ENCODE measurements at regions of chr1 and their contacts with region 1.

Region 1: DNA sequence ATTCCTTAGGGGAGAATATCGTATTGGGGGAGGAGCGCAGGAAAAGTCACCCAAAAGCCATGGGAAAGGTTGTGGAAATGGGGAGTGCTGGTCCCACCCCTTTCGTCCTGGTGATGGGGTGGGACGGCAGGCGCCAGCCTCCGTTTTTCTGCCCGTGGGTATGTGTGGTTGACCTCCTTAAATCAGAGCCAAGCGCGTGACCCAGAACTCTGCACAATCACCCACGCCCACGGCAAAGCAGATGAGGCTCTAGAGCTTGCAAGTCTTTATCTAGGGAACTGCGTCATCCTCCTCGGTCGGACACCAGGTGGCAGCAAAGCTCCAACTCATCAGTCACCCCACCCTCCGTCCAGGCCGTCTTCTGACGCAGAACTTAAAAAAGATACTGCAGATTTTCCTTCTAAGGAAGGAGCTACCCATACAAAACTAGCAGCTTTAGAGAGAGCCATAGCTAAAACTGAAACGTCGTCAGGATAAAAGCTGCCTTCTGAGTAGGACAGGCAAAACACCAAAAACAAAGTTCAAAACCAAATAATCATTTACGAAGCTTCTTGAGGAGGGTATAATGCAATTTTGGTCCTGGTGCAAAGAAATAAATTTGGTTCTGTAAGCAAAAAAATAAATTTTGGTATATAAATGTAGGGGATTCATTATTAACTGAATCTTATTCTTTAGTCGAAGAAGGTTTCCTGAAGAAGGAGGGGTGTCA is 62.0 kb downstream of the TBX19 start:
- DNase-seq: peak; percentile 76 to 93 (median 83)
- ATAC-seq: peak; percentile 98
- H3K4me3 ChIP-seq: no peak overlapping the region
- H3K27ac ChIP-seq: no peak overlapping the region
- H3K4me1 ChIP-seq: peaks cover 3 to 20% of the 10 kb centered on the region in 2 experiments; a peak in 4 of 5 replicates
- H3K27me3 ChIP-seq: no peaks in the 10 kb centered on the region
- CTCF ChIP-seq: peak; percentile 91 to 95 (median 92)
- EP300 ChIP-seq: no peak
- POLR2A ChIP-seq: no peak
- RAD21 ChIP-seq: peak; percentile 96

Region 2: GRCh38 chr1:168092566-168093355 is 250.0 kb before region 1 on chr1:
- CTCF ChIA-PET with region 1: interaction called, 5 read pairs
- POLR2A ChIA-PET with region 1: no interaction called
- in situ Hi-C with region 1: no loop called
- intact Hi-C with region 1: loop called (anchors 5 kb)
- DNase-seq: peak in 3 of 4 experiments; percentile 34 to 41 (median 37)
- ATAC-seq: peak; percentile 56
- H3K4me3 ChIP-seq: no peak overlapping the region
- H3K27ac ChIP-seq: no peak overlapping the region
- H3K4me1 ChIP-seq: peaks cover 0 to 8% of the 10 kb centered on the region in 2 experiments; a peak in 2 of 5 replicates
- H3K27me3 ChIP-seq: peaks cover 9 to 39% of the 10 kb centered on the region in 2 experiments; a peak in 4 of 5 replicates
- CTCF ChIP-seq: peak; percentile 43 to 62 (median 59); a peak in 5 of 6 replicates
- EP300 ChIP-seq: no peak
- POLR2A ChIP-seq: no peak
- RAD21 ChIP-seq: peak; percentile 47 to 76; a peak in 3 of 4 replicates

Region 3: DNA sequence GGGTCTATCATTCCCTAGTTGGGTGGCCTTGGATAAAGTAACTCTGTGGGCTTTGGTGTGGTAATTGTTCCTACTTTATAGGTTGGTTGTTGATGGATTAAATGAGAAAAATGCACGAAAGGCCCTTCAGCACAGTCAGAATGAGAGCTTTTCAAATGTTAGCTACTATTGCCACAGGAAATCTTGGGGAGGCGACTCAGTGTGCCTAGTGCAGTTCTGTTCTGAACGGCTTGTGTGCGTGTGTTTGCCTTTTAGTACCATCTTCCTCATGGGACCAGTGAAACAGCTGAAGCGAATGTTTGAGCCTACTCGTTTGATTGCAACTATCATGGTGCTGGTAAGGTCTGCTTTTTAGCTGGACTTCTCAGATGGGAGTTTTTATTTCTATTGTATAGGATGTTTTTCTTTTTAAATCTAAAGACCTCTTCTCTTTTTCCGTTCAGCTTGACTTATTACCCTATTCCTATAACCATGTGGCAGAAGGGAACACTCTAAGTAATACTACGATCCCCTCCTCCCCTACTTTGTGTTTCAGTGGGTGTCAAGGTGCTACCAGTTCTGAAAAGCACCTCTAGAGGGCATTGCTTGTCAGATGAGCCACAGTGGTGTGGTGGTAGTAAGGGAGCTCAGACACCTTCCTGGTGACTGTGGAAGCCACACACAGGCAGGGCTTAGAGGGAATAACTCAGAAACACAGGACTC is 107.7 kb before region 1 on chr1:
- CTCF ChIA-PET with region 1: no interaction called
- POLR2A ChIA-PET with region 1: no interaction called
- in situ Hi-C with region 1: no loop called
- intact Hi-C with region 1: loop called (anchors 1 kb)
- DNase-seq: peak; percentile 67 to 78 (median 74)
- ATAC-seq: peak; percentile 99
- H3K4me3 ChIP-seq: no peak overlapping the region
- H3K27ac ChIP-seq: no peak overlapping the region
- H3K4me1 ChIP-seq: no peaks in the 10 kb centered on the region
- H3K27me3 ChIP-seq: no peaks in the 10 kb centered on the region
- CTCF ChIP-seq: peak; percentile 86 to 89 (median 88)
- EP300 ChIP-seq: no peak
- POLR2A ChIP-seq: no peak
- RAD21 ChIP-seq: peak; percentile 78 to 92

Region 4: DNA sequence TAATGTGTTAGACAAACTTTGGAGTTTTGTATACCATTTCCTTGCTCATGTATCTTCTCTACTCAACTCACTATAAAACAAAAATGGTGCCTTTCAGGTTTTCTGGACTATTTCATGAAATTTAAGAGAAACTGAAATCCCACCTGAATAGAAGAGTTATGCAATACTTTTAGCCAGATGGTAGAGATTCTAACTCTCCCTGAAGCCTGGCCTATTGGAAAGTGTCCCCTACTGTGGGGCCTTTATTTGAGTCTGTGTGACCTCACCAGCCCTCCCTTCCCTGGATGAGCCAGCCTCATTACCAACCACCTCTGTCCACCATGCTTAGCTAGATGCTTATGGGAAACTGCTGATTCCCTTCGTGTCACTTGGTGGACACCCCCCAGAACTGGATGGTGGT is 26.6 kb before region 1 on chr1:
- CTCF ChIA-PET with region 1: no interaction called
- POLR2A ChIA-PET with region 1: no interaction called
- in situ Hi-C with region 1: no loop called
- intact Hi-C with region 1: no loop called
- DNase-seq: no peak
- ATAC-seq: no peak
- H3K4me3 ChIP-seq: no peak overlapping the region
- H3K27ac ChIP-seq: no peak overlapping the region
- H3K4me1 ChIP-seq: peaks cover 3 to 6% of the 10 kb centered on the region in 2 experiments; a peak in 4 of 5 replicates
- H3K27me3 ChIP-seq: no peaks in the 10 kb centered on the region
- CTCF ChIP-seq: no peak
- EP300 ChIP-seq: no peak
- POLR2A ChIP-seq: no peak
- RAD21 ChIP-seq: no peak

Region 5: DNA sequence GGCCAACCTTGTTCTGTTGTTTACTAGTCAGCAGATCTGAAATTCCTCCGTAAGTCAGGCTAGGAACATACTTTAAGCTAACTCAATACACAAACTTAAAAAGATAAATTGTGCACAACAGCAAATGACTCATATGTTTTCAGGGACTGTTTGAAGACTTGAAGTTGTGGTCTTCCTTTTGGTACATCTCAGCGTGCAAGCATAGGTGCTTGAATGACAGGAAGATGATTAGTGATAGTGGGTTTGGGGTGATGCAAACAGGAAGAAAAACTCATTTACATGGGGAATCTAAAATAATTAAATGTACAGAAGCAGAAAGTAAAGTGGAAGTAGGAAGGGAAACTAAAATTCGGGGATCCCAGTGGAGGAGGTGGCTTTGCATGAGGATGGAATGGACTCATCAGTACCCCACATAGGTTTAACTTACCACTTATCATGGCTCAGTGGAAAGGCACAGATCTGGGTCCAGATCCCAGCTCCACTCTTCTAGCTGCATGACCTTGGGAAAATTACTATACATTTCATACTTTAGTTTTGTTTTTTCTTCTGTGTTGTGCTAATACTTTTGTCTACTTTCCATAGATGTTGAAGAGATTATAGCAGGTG is 78.8 kb after region 1 on chr1:
- CTCF ChIA-PET with region 1: interaction called, 7 read pairs
- POLR2A ChIA-PET with region 1: interaction called, 3 read pairs
- in situ Hi-C with region 1: no loop called
- intact Hi-C with region 1: loop called (anchors 2 kb)
- DNase-seq: no peak
- ATAC-seq: no peak
- H3K4me3 ChIP-seq: no peak overlapping the region
- H3K27ac ChIP-seq: no peak overlapping the region
- H3K4me1 ChIP-seq: no peaks in the 10 kb centered on the region
- H3K27me3 ChIP-seq: 0 out of 5 replicates have a peak, but pooled peaks cover 0 to 4% of the 10 kb centered on the region in 2 experiments
- CTCF ChIP-seq: no peak
- EP300 ChIP-seq: no peak
- POLR2A ChIP-seq: no peak
- RAD21 ChIP-seq: no peak

Region 6: DNA sequence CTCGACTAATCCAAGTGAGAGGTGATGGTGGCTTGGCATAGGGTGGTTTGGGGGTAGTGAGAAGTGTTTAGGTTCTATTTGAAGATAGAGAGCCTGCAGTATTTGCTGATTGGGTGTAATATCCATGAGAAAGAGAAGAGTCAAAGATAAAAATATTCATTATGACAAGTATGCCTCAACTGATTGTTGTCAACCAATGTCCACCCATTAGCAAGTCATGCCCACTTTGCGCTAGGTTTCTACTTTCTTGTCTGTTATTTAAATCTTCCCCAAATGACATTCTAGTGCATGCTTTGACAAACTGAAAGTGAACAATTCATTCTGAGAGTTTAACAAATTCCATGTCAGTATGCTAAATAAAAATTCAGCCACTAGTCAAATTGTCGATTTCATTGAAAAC is 229.9 kb after region 1 on chr1:
- CTCF ChIA-PET with region 1: interaction called, 4 read pairs
- POLR2A ChIA-PET with region 1: no interaction called
- in situ Hi-C with region 1: loop called (anchors 10 kb)
- intact Hi-C with region 1: loop called (anchors 5 kb)
- DNase-seq: no peak
- ATAC-seq: no peak
- H3K4me3 ChIP-seq: no peak overlapping the region
- H3K27ac ChIP-seq: no peak overlapping the region
- H3K4me1 ChIP-seq: no peaks in the 10 kb centered on the region
- H3K27me3 ChIP-seq: peaks cover 0 to 3% of the 10 kb centered on the region in 2 experiments; a peak in 1 of 5 replicates
- CTCF ChIP-seq: no peak
- EP300 ChIP-seq: no peak
- POLR2A ChIP-seq: no peak
- RAD21 ChIP-seq: no peak